Sigmoid colon (tissue), 7 donors: ENCODE measurements at regions of chr11 and their contacts with region 1.

Region 1: DNA sequence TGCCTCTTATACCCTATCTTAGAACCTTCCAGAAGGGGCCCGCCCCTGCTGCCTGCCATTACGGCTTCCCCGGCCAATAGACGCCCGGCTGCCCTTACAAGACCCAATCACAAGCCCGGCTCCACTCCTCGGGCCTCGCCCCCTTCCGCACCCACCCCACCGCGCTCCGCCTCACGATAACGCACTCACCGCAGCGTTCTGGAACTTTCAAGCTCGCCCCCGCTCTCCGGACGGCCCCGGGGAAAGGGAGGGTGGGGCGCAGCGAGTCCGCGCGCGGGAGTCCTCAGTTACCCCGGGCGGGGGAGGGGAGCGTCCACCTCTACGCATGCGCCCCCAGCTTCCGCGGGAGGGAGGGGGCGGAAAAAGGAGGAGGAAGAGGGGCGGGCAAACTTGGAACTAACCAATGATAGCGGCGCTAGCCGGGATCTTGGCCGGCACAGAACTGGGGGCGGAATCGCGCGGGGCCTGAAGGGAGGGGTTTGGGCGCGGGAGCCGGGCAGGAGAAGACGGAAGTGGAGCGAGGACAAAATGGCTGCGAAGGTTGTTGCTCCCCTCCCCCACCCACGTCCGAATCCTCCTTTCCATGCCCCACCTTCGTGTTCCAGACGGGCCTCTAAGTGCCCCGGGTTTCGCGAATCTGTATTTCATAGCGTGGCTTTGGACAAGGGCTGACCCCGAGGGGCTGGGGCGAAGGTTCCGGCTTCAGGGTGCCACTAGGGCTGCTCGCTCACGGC is 389 bp upstream of the HSPA8 start:
- DNase-seq: peak; percentile 100
- H3K4me3 ChIP-seq: peak overlapping the region; percentile 72 to 95 (median 88)
- H3K27ac ChIP-seq: peak overlapping the region; percentile 98 to 100 (median 99)
- H3K4me1 ChIP-seq: peaks cover 0 to 70% (median 61%) of the 10 kb centered on the region in 4 donors
- H3K27me3 ChIP-seq: no peaks in the 10 kb centered on the region
- CTCF ChIP-seq: no peak
- EP300 ChIP-seq: peak in 2 of 4 donors; percentile 56 to 71
- POLR2A ChIP-seq: peak; percentile 39 to 44

Region 2: DNA sequence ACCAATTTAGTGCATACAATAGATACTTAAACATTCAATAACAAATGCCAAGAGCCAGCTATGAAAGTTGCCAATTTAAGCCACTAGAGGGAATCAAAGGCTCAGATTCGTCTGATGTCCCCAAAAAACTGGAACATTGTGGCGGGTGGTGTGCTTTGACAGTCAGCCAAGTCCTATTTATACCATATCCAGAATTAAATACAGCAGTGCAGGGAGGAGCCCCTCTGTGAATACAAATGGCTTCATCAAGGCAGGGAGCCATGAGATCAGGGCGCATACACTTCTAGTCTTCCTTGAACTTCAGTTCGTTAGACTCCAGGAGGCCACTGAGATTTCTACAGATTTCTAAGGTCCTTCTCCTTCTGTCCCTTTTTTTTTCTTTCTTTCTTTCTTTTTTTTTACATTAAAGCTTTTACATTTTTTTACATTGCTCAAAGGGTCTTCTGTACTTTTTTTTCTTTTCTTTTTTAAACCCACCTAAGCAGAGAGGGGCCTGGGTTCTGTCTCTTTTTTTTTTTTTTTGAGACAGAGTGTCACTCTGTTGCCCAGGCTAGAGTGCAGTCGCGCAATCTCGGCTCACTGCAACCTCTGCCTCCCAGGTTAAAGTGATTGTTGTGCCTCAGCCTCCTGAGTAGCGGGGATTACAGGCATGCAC is 41.1 kb after region 1 on chr11:
- intact Hi-C with region 1: loop called (anchors 5 kb)
- DNase-seq: peak; percentile 83
- H3K4me3 ChIP-seq: no peak overlapping the region
- H3K27ac ChIP-seq: peak overlapping the region; percentile 66 to 78 (median 70)
- H3K4me1 ChIP-seq: peaks cover 0 to 76% (median 72%) of the 10 kb centered on the region in 4 donors
- H3K27me3 ChIP-seq: no peaks in the 10 kb centered on the region
- CTCF ChIP-seq: peak; percentile 39 to 59 (median 48)
- EP300 ChIP-seq: peak in 1 of 4 donors; percentile 12
- POLR2A ChIP-seq: no peak